ENCODE measurements at regions of chr10 and their contacts with region 1.

Region 1: DNA sequence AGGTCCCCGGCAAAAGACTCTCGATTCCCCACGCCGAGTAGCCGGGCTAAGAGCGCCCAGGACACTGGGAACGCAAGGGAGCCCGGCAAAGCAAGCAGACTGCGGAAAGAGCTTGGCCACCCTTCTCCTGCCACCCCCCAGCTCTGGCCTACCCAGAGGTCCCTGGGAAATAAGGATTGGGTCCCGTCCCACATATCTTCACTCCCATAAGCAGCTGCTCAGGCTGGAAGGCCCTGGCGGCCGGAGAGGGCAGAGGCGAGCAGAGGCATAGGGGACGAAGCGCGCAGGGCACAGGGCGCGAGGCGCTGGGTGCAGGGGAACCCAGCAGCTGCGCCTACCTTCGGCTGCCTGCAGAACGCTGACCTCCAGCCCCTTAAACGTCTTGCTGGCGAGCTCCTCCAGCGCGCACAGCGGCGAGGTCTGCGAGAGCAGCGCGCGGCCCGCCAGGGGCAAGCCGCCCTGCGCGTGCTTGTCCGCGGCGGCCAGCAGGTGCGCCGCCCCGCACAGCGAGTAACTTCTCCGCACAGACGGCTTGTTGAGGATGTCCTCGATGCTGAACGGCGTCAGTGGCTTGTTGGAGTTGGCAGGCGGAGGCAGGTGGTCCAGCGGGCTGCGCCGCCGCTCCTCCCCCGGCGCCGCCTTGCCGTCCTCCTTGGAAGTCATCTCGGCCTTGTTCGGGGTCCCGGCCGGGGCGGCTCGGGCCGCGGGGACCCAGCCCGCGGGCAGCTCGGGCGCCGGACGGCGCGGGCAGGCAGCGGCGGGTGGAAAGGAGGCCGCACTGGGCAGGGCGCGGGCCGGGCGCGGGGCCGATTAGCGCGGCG is 900 bp downstream of the LBX1 start:
- DNase-seq: no peak
- ATAC-seq: no peak
- H3K4me3 Mint-ChIP-seq: peak overlapping the region; percentile 48
- H3K27ac Mint-ChIP-seq: no peak overlapping the region
- H3K4me1 Mint-ChIP-seq: peaks cover 41% of the 10 kb centered on the region
- H3K27me3 Mint-ChIP-seq: peaks cover 63% of the 10 kb centered on the region
- CTCF ChIP-seq: no peak

Region 2: DNA sequence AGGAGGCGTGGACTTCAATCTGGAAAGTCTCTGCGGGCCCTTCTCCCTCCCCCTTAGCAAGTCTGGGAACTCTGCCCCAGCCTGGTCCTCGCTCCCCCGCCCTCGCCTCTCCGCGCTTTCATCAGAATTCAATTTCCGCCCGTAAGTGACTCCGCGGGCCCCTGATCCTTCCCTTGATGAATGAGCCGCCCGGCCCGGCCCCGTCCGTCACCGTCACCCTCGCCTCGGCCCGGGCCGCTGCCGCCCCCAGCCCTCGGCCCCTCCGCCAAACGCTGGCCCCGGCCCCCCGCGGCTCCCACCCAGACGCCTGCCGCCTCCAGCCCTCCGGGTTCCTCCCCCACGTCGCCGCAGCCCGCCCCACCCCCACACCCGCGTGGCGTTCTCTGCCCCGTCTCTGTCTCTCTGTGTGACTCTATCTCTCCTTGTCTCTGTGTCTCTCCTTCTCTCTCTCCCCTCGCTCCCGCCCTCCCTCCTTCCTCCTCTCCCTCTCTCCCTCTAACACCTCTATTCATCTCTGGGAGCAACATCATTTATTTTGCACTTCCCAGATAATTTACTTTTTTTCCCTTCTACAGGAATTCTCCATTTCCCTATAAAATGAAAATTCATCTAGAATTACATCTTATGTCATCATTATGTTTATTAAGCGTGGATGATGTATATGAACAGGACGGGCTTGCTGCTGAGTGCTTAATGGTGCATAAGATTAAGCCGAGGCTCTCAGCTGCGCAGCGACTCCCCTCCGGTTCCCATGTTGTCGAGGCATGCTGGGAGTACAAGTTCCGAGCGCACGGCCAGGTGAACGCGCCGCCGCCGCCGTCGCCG is 574.2 kb before region 1 on chr10:
- CTCF ChIA-PET with region 1: no interaction called
- POLR2A ChIA-PET with region 1: no interaction called
- intact Hi-C with region 1: loop called (anchors 10 kb)
- DNase-seq: no peak
- ATAC-seq: peak; percentile 28
- H3K4me3 Mint-ChIP-seq: peak overlapping the region; percentile 70
- H3K27ac Mint-ChIP-seq: no peak overlapping the region
- H3K4me1 Mint-ChIP-seq: peaks cover 25% of the 10 kb centered on the region
- H3K27me3 Mint-ChIP-seq: peaks cover 62% of the 10 kb centered on the region
- CTCF ChIP-seq: no peak

Region 3: DNA sequence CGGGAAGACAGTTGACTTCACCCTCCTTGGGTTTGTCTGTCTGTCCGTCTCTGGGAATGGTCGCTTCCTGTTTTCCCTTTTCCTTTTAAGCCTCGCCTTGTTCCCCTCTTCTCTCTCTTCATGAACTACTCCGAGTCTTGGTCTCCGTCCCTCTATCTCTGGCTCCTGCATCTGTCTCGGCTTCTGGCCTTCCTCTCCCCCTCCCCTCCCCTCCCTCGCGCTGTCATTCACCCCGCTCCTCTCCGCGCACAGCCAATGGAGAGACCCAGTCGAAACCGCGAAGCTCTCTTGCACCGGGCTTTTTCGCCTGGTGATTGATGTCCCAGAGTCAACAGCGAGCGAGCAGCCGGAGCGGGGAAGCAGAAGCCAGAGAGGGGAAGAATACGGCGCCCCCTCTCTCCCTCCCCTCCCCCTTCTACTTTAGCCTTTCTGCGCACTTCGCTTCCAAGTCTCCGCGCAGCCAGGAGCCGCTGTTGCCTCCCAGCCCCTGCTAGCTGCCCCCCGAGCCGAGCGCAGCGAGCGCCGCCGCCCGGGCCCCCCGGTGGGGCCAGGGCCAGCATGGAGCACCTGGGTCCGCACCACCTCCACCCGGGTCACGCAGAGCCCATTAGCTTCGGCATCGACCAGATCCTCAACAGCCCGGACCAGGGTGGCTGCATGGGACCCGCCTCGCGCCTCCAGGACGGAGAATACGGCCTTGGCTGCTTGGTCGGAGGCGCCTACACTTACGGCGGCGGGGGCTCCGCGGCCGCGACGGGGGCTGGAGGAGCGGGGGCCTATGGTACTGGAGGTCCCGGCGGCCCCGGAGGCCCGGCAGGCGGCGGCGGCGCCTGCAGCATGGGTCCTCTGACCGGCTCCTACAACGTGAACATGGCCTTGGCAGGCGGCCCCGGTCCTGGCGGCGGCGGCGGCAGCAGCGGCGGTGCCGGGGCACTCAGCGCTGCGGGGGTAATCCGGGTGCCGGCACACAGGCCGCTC is 97.1 kb before region 1 on chr10 and contains the start of gene TLX1:
- CTCF ChIA-PET with region 1: no interaction called
- POLR2A ChIA-PET with region 1: no interaction called
- intact Hi-C with region 1: loop called (anchors 2 kb)
- DNase-seq: peak; percentile 23
- ATAC-seq: no peak
- H3K4me3 Mint-ChIP-seq: peak within 1 kb of the TSS; percentile 41
- H3K27ac Mint-ChIP-seq: no peak within 1 kb of the TSS
- H3K4me1 Mint-ChIP-seq: peaks cover 40% of the 10 kb centered on the region
- H3K27me3 Mint-ChIP-seq: peaks cover 73% of the 10 kb centered on the region
- CTCF ChIP-seq: no peak
- total RNA-seq, gene TLX1: not detected in 2 replicates

Region 4: GRCh38 chr10:101214446-101215396 is 13.6 kb before region 1 on chr10:
- CTCF ChIA-PET with region 1: interaction called, 13 read pairs
- POLR2A ChIA-PET with region 1: interaction called, 3 read pairs
- intact Hi-C with region 1: loop called (anchors 1 kb)
- DNase-seq: peak; percentile 72
- ATAC-seq: peak; percentile 75
- H3K4me3 Mint-ChIP-seq: peak overlapping the region; percentile 60
- H3K27ac Mint-ChIP-seq: peak overlapping the region; percentile 68
- H3K4me1 Mint-ChIP-seq: peaks cover 32% of the 10 kb centered on the region
- H3K27me3 Mint-ChIP-seq: peaks cover 56% of the 10 kb centered on the region
- CTCF ChIP-seq: peak; percentile 73

Measured in activated B cell treated with CpG ODN at 0.5 μM for 24 hours (primary cell).